ENCODE measurements at regions of chr11 and their contacts with region 1.

Region 1: GRCh38 chr11:17719938-17720795 is 796 bp downstream of the MYOD1 start:
- DNase-seq: no peak
- H3K4me3 ChIP-seq: no peak overlapping the region
- H3K27ac ChIP-seq: no peak overlapping the region
- H3K27me3 ChIP-seq: peaks cover 56% of the 10 kb centered on the region
- CTCF ChIP-seq: no peak

Region 2: GRCh38 chr11:17598700-17599459 is 121.3 kb before region 1 on chr11:
- CTCF ChIA-PET with region 1: interaction called, 11 read pairs
- POLR2A ChIA-PET with region 1: no interaction called
- DNase-seq: peak; percentile 26
- H3K4me3 ChIP-seq: no peak overlapping the region
- H3K27ac ChIP-seq: no peak overlapping the region
- H3K27me3 ChIP-seq: peaks cover 4% of the 10 kb centered on the region
- CTCF ChIP-seq: peak; percentile 98

Measured in AG04450 (cell line).